Activated CD4-positive, alpha-beta T cell treated with anti-CD3 and anti-CD28 coated beads, Interleukin-2, amount 10 ng/mL, durations not matched to agents 24 days and 14 days (primary cell): ENCODE measurements at regions of chr18 and their contacts with region 1.

Region 1: GRCh38 chr18:48129621-48130082 is 199.2 kb upstream of the SMAD2 start:
- DNase-seq: no peak
- H3K4me3 Mint-ChIP-seq: no peak overlapping the region
- H3K27ac Mint-ChIP-seq: no peak overlapping the region
- H3K4me1 Mint-ChIP-seq: peaks cover 19% of the 10 kb centered on the region
- H3K27me3 Mint-ChIP-seq: peaks cover 60% of the 10 kb centered on the region

Region 2: DNA sequence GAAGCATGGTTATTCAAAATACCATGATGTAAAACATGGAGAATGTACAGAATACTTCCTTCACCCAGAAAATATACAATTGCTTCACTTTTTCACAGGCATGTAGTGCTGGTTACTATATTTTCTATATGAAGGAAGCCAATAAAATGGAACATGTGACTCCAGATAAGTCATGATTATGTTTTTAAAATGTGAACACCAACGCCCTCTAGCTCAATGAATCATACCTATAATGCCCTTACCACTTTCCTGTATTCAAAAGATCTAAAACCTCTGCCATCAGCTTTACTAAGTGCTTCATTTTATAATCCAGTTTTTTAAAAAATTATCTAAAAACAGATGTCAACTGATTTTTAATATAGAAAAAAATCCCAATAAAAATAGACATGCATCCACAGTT is 259.0 kb before region 1 on chr18:
- intact Hi-C with region 1: no loop called
- DNase-seq: no peak
- H3K4me3 Mint-ChIP-seq: no peak overlapping the region
- H3K27ac Mint-ChIP-seq: peak overlapping the region; percentile 70
- H3K4me1 Mint-ChIP-seq: peaks cover 33% of the 10 kb centered on the region
- H3K27me3 Mint-ChIP-seq: no peaks in the 10 kb centered on the region

Region 3: GRCh38 chr18:47912343-47912742 is 217.3 kb before region 1 on chr18:
- intact Hi-C with region 1: loop called (anchors 10 kb)
- DNase-seq: peak; percentile 58
- H3K4me3 Mint-ChIP-seq: peak overlapping the region; percentile 64
- H3K27ac Mint-ChIP-seq: peak overlapping the region; percentile 93
- H3K4me1 Mint-ChIP-seq: peaks cover 65% of the 10 kb centered on the region
- H3K27me3 Mint-ChIP-seq: no peaks in the 10 kb centered on the region

Region 4: DNA sequence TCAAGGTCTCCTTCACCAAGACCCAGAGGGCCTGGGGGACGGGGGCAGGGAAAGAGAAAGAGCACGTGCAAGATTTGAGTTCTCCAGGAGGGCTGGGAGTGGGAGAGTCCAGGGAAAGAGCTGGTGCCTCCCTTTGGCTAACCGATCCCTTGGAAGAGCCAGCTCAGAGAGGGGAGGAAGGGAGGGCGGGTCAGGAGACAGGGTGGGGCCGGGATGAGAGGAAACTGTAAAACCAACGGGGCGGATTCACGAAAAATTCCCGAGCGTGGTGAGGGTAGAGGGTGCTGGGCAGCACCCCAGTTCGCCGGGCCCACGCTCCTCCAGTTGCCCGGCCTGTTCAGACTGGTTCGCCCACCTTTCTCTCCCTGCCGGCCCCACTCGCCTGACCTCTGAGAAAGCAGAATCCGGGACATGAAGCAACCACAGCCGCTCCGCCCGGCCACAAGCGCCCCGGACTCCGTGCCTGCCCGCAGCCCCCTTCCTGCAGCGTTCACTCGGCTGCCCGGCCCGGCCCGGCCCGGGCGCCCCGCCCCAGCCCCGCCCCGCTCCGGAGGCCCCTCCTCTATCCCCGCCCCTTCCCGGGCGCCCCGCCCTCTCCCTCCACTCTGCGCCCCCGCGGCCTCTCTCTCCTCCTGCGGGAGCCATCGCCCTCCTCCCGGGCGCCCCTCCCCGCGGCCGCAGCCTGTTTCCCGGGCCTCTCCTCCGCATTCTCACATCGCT is 31.7 kb after region 1 on chr18:
- intact Hi-C with region 1: loop called (anchors 1 kb)
- DNase-seq: peak; percentile 89
- H3K4me3 Mint-ChIP-seq: peak overlapping the region; percentile 75
- H3K27ac Mint-ChIP-seq: peak overlapping the region; percentile 60
- H3K4me1 Mint-ChIP-seq: peaks cover 8% of the 10 kb centered on the region
- H3K27me3 Mint-ChIP-seq: peaks cover 45% of the 10 kb centered on the region

Region 5: DNA sequence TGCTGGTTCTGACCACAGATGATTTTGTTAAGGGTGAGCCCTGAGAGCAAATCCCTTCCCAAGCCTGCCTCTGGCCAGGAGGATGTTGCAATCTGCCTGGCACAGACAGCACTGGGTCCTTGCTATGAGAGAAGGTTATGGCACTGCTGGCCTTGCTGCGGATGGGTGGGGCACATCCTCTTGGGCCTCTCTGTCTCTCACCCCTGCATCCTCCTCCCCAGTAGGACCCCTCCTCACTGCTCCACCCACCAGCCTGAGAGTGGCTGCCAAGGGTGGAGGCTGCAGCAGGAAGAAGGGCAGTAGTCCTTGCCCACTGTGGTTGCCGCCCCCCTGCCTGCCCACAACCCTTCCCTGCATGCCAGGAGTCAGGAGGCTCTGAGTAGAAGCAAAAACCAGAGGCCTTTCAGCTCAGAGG is 98.7 kb after region 1 on chr18:
- intact Hi-C with region 1: loop called (anchors 2 kb)
- DNase-seq: peak; percentile 64
- H3K4me3 Mint-ChIP-seq: no peak overlapping the region
- H3K27ac Mint-ChIP-seq: peak overlapping the region; percentile 35
- H3K4me1 Mint-ChIP-seq: peaks cover 29% of the 10 kb centered on the region
- H3K27me3 Mint-ChIP-seq: peaks cover 9% of the 10 kb centered on the region